ENCODE measurements at regions of chr1 and their contacts with region 1.

Region 1: DNA sequence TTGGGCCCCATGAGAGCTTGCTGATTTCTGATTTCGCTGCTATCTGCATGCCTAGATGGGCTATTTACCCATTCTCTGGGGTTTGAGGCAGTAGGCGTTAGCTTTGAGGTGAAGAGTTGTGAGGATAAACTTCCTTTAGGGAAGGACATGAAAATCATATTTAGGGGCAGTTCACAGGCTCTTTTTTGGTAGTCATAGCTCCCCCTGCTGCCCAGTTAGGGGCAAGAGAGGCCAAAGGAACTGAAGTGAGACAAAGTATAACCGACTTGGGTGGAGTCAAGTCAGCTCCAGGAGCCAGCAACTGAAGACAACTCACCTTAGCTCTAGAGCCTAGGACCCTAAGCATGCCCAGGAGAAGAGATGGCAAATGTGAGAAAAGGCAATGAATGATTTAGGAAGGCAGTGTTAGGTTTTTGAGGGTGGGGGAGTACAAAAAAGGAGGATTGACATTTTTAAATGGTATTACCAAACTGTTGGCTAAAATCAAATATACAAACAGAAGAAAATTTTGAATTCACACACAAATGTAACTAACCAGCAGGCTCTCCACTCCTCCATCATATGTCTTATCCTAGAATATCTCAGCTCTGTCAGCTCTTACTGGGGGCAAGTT is 625.2 kb downstream of the LMO4 start:
- DNase-seq: peak; percentile 39 to 72
- ATAC-seq: peak; percentile 58 to 81 (median 70)
- H3K4me3 ChIP-seq: no peak overlapping the region
- H3K4me3 Mint-ChIP-seq: no peak overlapping the region
- H3K27ac ChIP-seq: no peak overlapping the region
- H3K27ac Mint-ChIP-seq: no peak overlapping the region
- H3K4me1 ChIP-seq: peaks cover 5% of the 10 kb centered on the region
- H3K4me1 Mint-ChIP-seq: peaks cover 0 to 6% of the 10 kb centered on the region in 2 donors
- H3K27me3 ChIP-seq: no peaks in the 10 kb centered on the region
- H3K27me3 Mint-ChIP-seq: peaks cover 7 to 9% of the 10 kb centered on the region in 2 donors
- CTCF ChIP-seq: peak; percentile 74

Region 2: GRCh38 chr1:87131809-87132283 is 822.0 kb before region 1 on chr1:
- intact Hi-C with region 1: loop called (anchors 2 kb)
- DNase-seq: peak; percentile 63 to 84
- ATAC-seq: peak; percentile 91 to 96 (median 96)
- H3K4me3 ChIP-seq: peak overlapping the region; percentile 63
- H3K4me3 Mint-ChIP-seq: peak overlapping the region; percentile 84
- H3K27ac ChIP-seq: no peak overlapping the region
- H3K27ac Mint-ChIP-seq: peak overlapping the region in 1 of 2 donors; percentile 54
- H3K4me1 ChIP-seq: peaks cover 12% of the 10 kb centered on the region
- H3K4me1 Mint-ChIP-seq: peaks cover 13% of the 10 kb centered on the region in 2 donors
- H3K27me3 ChIP-seq: no peaks in the 10 kb centered on the region
- H3K27me3 Mint-ChIP-seq: peaks cover 20 to 23% of the 10 kb centered on the region in 2 donors
- CTCF ChIP-seq: peak; percentile 97

Region 3: DNA sequence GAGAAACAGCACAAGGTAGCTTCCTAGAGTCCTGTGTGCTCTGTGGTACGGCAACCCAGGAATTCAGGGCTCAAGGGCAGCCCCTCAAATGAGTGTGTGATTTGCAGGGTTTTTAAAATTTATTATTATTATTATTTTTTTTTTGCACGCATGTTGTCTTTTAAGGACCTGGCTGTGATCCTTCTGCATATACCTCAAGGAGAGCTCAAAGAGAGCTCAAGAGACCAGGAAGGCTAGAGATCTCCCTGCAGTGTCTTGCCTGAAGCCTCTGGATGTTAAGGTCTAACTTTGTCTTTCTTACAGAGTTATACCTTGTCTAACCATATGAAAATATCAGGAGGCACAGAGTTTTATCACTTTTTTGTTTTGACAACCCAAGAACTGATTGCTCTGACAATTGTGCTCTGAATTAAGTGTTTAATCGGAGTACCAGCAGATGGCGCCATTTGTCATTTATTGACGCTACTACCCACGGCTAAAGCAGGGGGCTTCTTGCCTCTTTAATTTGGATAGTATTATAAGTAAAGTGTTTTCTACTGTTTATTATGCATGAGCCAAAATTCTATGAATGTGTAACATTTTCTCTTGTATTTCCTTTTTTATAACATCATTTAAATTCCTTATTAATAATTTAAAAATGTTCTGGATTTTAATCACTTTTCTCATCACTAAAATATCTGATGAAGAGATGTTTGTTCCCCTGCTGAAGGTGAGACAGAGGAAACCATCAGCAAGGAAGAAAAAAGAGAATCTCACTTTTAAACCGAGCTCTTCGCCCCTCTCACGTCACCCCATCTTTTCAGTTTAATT is 660.9 kb before region 1 on chr1:
- intact Hi-C with region 1: loop called (anchors 1 kb)
- DNase-seq: peak; percentile 41 to 83
- ATAC-seq: peak in 2 of 3 donors; percentile 57 to 75
- H3K4me3 ChIP-seq: no peak overlapping the region
- H3K4me3 Mint-ChIP-seq: no peak overlapping the region
- H3K27ac ChIP-seq: no peak overlapping the region
- H3K27ac Mint-ChIP-seq: no peak overlapping the region
- H3K4me1 ChIP-seq: no peaks in the 10 kb centered on the region
- H3K4me1 Mint-ChIP-seq: no peaks in the 10 kb centered on the region
- H3K27me3 ChIP-seq: no peaks in the 10 kb centered on the region
- H3K27me3 Mint-ChIP-seq: peaks cover 7 to 12% of the 10 kb centered on the region in 2 donors
- CTCF ChIP-seq: peak; percentile 91

Region 4: GRCh38 chr1:87328272-87329050 is 625.4 kb before region 1 on chr1 and contains the start of gene LMO4:
- intact Hi-C with region 1: loop called (anchors 1 kb)
- DNase-seq: peak; percentile 82 to 91
- ATAC-seq: peak; percentile 72 to 87 (median 83)
- H3K4me3 ChIP-seq: peak within 1 kb of the TSS; percentile 91
- H3K4me3 Mint-ChIP-seq: peak within 1 kb of the TSS; percentile 95
- H3K27ac ChIP-seq: peak within 1 kb of the TSS; percentile 84
- H3K27ac Mint-ChIP-seq: peak within 1 kb of the TSS; percentile 88 to 98
- H3K4me1 ChIP-seq: peaks cover 17% of the 10 kb centered on the region
- H3K4me1 Mint-ChIP-seq: peaks cover 44 to 47% of the 10 kb centered on the region in 2 donors
- H3K27me3 ChIP-seq: no peaks in the 10 kb centered on the region
- H3K27me3 Mint-ChIP-seq: no peaks in the 10 kb centered on the region
- CTCF ChIP-seq: no peak
- total RNA-seq, gene LMO4: 38.2 to 50.1 (median 50.0) TPM

Measured in natural killer cell (primary cell).